ENCODE measurements at regions of chr7 and their contacts with region 1.

Region 1: DNA sequence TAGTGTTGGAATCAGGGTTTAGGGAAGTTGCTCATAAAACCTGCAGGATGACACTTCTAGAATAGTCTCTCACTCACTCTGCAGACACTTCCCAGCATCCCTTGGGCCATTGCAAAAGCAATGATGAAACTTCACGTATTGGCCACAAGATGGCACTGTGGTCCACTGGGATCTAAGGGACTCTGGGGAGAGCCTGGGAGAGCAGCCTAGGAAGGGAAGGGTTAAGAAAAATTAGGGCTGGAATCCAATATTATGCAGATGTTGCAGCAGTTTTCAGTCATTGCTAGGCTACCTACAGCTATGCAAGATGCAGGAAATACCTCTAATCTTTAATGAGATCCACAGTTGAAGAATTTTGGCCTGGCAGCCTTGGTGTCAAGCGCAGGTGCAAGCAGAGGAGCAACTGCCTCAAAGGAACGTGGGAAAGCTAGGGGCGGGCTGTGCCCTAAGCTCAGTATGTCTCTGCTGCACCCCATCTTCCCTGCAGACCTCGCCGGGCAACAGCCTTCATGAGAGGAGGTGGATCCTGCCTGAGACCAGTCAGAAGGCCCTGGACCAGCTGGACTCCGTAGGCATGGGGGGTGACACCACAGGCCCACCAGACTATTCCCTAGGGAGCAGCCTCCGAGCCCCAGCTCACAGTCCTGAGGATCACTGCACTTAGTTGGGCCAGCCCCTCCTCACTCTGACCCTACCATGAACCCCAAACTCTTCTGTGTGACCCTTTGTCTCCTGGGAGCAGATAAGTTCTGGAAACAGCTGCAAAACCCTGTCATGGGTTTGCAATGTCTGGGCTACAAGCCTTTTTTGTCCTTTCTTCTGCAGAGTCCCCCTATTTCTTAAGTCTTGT is 127.9 kb upstream of the PRSS58 start:
- DNase-seq: peak in 1 of 2 experiments; percentile 68
- H3K4me3 ChIP-seq: no peak overlapping the region
- H3K27ac ChIP-seq: no peak overlapping the region
- H3K4me1 ChIP-seq: no peaks in the 10 kb centered on the region; a peak in 1 of 7 replicates
- H3K27me3 ChIP-seq: no peaks in the 10 kb centered on the region
- CTCF ChIP-seq: peak; percentile 74 to 88 (median 88)
- EP300 ChIP-seq: peak in 1 of 2 experiments; percentile 20; a peak in 1 of 3 replicates
- POLR2A ChIP-seq: no peak
- RAD21 ChIP-seq: peak; percentile 52 to 65; a peak in 3 of 4 replicates

Region 2: GRCh38 chr7:142130267-142130666 is 255.4 kb before region 1 on chr7:
- CTCF ChIA-PET with region 1: no interaction called
- POLR2A ChIA-PET with region 1: no interaction called
- DNase-seq: no peak
- H3K4me3 ChIP-seq: no peak overlapping the region
- H3K27ac ChIP-seq: no peak overlapping the region
- H3K4me1 ChIP-seq: peaks cover 0 to 4% (median 1%) of the 10 kb centered on the region in 4 experiments; a peak in 3 of 7 replicates
- H3K27me3 ChIP-seq: no peaks in the 10 kb centered on the region
- CTCF ChIP-seq: no peak
- EP300 ChIP-seq: no peak
- POLR2A ChIP-seq: no peak
- RAD21 ChIP-seq: no peak

Region 3: GRCh38 chr7:142248166-142249160 is 137.3 kb before region 1 on chr7:
- CTCF ChIA-PET with region 1: no interaction called
- POLR2A ChIA-PET with region 1: no interaction called
- DNase-seq: peak in 1 of 2 experiments; percentile 51
- H3K4me3 ChIP-seq: no peak overlapping the region
- H3K27ac ChIP-seq: no peak overlapping the region
- H3K4me1 ChIP-seq: peaks cover 0 to 5% (median 2%) of the 10 kb centered on the region in 4 experiments; a peak in 2 of 7 replicates
- H3K27me3 ChIP-seq: no peaks in the 10 kb centered on the region
- CTCF ChIP-seq: peak in 1 of 3 experiments; percentile 30; a peak in 2 of 4 replicates
- EP300 ChIP-seq: no peak
- POLR2A ChIP-seq: no peak
- RAD21 ChIP-seq: peak in 1 of 2 experiments; percentile 34; a peak in 1 of 4 replicates

Region 4: GRCh38 chr7:142338633-142339501 is 46.8 kb before region 1 on chr7:
- CTCF ChIA-PET with region 1: interaction called, 24 read pairs
- POLR2A ChIA-PET with region 1: no interaction called
- DNase-seq: peak; percentile 34 to 87
- H3K4me3 ChIP-seq: no peak overlapping the region
- H3K27ac ChIP-seq: no peak overlapping the region
- H3K4me1 ChIP-seq: peaks cover 0 to 5% (median 4%) of the 10 kb centered on the region in 4 experiments; a peak in 5 of 7 replicates
- H3K27me3 ChIP-seq: no peaks in the 10 kb centered on the region
- CTCF ChIP-seq: peak; percentile 89 to 92 (median 92)
- EP300 ChIP-seq: no peak
- POLR2A ChIP-seq: no peak
- RAD21 ChIP-seq: peak; percentile 92 to 94

Region 5: DNA sequence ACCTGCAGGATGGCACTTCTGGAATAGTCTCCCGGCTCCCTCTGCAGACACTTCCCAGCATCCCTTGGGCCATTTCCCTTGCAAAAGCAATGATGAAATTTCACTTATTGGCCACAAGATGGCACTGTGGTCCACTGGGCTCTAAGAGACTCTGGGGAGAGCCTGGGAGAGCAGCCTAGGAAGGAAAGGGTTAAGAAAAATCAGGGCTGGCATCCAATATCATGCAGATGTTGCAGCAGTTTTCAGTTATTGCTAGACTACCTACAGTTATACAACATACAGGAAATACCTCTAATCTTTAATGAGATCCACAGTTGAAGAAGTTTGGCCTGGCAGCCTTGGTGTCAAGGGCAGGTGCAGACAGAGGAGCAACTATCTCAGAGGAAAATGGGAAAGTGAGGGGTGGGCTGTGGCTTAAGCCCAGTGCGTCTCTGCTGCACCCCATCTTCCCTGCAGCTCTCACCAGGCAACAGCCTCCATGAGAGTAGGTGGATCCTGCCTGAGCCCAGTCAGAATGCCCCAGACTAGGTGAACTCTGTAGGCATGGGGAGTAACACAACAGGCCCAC is 27.7 kb before region 1 on chr7:
- CTCF ChIA-PET with region 1: interaction called, 337 read pairs
- POLR2A ChIA-PET with region 1: no interaction called
- DNase-seq: peak in 1 of 2 experiments; percentile 56
- H3K4me3 ChIP-seq: no peak overlapping the region
- H3K27ac ChIP-seq: no peak overlapping the region
- H3K4me1 ChIP-seq: peaks cover 5 to 13% (median 9%) of the 10 kb centered on the region in 4 experiments; a peak in 5 of 7 replicates
- H3K27me3 ChIP-seq: no peaks in the 10 kb centered on the region
- CTCF ChIP-seq: peak; percentile 32 to 86 (median 86)
- EP300 ChIP-seq: no peak
- POLR2A ChIP-seq: no peak
- RAD21 ChIP-seq: peak; percentile 78 to 88

Region 6: GRCh38 chr7:142405122-142405765 is 19.5 kb after region 1 on chr7:
- CTCF ChIA-PET with region 1: interaction called, 59 read pairs
- POLR2A ChIA-PET with region 1: no interaction called
- DNase-seq: no peak
- H3K4me3 ChIP-seq: no peak overlapping the region
- H3K27ac ChIP-seq: no peak overlapping the region
- H3K4me1 ChIP-seq: no peaks in the 10 kb centered on the region
- H3K27me3 ChIP-seq: no peaks in the 10 kb centered on the region
- CTCF ChIP-seq: no peak
- EP300 ChIP-seq: no peak
- POLR2A ChIP-seq: no peak
- RAD21 ChIP-seq: no peak

Region 7: GRCh38 chr7:142438235-142438922 is 52.7 kb after region 1 on chr7:
- CTCF ChIA-PET with region 1: interaction called, 16 read pairs
- POLR2A ChIA-PET with region 1: no interaction called
- DNase-seq: peak in 1 of 2 experiments; percentile 61
- H3K4me3 ChIP-seq: no peak overlapping the region
- H3K27ac ChIP-seq: no peak overlapping the region
- H3K4me1 ChIP-seq: peaks cover 0 to 10% (median 0%) of the 10 kb centered on the region in 4 experiments; a peak in 1 of 7 replicates
- H3K27me3 ChIP-seq: no peaks in the 10 kb centered on the region
- CTCF ChIP-seq: peak; percentile 95 to 99 (median 95)
- EP300 ChIP-seq: 0 out of 3 replicates have a peak, but pooled peaks of 1 of the 2 experiments have one; percentile 23
- POLR2A ChIP-seq: no peak
- RAD21 ChIP-seq: peak; percentile 70 to 83

Region 8: DNA sequence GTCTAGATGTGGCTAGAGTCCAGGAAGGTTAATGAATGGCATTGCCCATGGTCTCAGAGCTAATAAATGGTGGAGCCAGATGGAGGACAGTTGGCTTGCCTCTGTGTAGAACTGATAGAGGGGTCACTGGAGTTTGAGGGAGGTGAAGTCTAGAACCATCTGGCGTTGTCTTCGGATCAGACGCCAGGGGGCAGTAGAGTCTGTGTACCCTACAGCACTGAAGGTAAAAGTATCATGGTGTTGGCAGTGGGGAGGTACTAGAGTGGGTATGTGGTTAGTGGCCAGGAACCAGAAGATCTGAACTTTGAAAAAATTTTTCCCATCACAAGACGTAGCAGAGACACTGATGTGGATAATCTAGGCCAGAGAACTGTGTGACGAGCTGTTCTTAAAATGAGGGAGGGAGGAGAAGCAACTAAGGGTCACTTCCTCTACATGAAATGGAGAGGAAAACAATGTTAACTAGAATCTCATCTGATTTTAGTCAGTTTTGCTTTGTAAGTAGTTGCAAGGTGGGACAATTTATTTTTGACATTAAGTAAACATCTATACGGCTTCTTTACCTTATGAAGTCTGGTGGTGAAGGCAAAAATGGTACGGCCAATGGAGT is 100.0 kb after region 1 on chr7:
- CTCF ChIA-PET with region 1: interaction called, 43 read pairs
- POLR2A ChIA-PET with region 1: no interaction called
- DNase-seq: peak in 1 of 2 experiments; percentile 70
- H3K4me3 ChIP-seq: no peak overlapping the region
- H3K27ac ChIP-seq: no peak overlapping the region
- H3K4me1 ChIP-seq: peaks cover 0 to 2% (median 0%) of the 10 kb centered on the region in 4 experiments; a peak in 2 of 7 replicates
- H3K27me3 ChIP-seq: no peaks in the 10 kb centered on the region
- CTCF ChIP-seq: peak; percentile 72 to 77 (median 76)
- EP300 ChIP-seq: no peak
- POLR2A ChIP-seq: no peak
- RAD21 ChIP-seq: peak; percentile 34 to 50

Region 9: DNA sequence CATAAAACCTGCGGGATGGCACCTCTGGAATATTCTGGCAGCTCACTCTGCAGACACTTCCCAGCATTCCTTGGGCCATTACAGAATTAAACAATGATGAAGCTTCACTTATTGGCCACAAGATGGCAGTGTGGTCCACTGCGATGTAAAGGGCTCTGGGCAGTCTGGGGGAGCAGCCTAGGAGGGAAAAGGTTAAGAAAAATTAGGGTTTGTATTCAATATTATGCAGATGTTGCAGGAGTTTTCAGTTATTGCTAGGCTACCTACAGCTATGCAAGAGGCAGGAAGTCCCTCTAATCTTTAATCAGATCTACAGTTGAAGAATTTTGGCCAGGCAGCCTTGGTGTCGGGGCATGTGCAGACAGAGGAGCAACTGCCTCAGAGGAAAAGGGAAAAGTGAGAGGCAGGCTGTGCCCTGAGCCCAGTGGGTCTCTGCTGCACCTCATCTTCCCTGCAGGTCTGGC is 130.4 kb after region 1 on chr7:
- CTCF ChIA-PET with region 1: interaction called, 29 read pairs
- POLR2A ChIA-PET with region 1: no interaction called
- DNase-seq: peak in 1 of 2 experiments; percentile 56
- H3K4me3 ChIP-seq: no peak overlapping the region
- H3K27ac ChIP-seq: no peak overlapping the region
- H3K4me1 ChIP-seq: peaks cover 0 to 3% (median 0%) of the 10 kb centered on the region in 4 experiments; a peak in 1 of 7 replicates
- H3K27me3 ChIP-seq: no peaks in the 10 kb centered on the region
- CTCF ChIP-seq: peak; percentile 53 to 81 (median 75)
- EP300 ChIP-seq: no peak
- POLR2A ChIP-seq: no peak
- RAD21 ChIP-seq: peak; percentile 61 to 67

Measured in H1 (cell line).